Colonic mucosa (tissue), 4 donors: ENCODE measurements at regions of chr6 and their contacts with region 1.

Region 1: DNA sequence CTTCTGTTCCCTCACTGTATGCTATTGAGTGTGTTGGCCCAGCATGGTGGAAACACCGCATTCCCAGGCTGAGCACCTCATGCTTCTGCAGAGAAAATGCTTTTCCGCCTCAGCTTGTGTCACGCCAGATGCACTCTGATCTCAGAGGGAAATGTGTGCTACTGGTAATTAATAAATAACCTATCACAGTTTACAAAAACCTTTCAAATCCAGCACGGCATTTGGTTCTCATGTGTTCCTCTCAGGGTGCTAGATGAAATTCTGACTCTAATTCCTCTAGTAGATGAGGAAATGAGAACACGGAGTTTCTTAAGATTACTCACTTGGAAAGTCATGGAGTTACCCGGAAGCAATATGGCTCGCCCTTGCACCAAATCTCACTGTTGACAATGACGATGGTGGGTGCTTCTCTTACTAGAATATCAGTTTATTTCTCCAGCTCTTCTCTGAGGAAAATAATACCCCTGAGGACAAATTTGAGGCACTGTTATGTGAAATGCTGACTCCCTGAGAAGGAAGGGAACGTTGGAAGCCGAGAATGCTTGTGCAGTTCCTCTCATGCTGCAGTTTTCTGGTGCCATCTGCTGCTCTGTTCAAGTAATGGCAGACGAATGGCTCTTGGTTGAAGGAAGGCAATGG is 116.6 kb downstream of the RNF144B start:
- DNase-seq: peak; percentile 65
- H3K4me3 ChIP-seq: peak overlapping the region; percentile 21
- H3K27ac ChIP-seq: no peak overlapping the region
- H3K4me1 ChIP-seq: no peaks in the 10 kb centered on the region
- H3K27me3 ChIP-seq: no peaks in the 10 kb centered on the region
- CTCF ChIP-seq: peak; percentile 88

Region 2: DNA sequence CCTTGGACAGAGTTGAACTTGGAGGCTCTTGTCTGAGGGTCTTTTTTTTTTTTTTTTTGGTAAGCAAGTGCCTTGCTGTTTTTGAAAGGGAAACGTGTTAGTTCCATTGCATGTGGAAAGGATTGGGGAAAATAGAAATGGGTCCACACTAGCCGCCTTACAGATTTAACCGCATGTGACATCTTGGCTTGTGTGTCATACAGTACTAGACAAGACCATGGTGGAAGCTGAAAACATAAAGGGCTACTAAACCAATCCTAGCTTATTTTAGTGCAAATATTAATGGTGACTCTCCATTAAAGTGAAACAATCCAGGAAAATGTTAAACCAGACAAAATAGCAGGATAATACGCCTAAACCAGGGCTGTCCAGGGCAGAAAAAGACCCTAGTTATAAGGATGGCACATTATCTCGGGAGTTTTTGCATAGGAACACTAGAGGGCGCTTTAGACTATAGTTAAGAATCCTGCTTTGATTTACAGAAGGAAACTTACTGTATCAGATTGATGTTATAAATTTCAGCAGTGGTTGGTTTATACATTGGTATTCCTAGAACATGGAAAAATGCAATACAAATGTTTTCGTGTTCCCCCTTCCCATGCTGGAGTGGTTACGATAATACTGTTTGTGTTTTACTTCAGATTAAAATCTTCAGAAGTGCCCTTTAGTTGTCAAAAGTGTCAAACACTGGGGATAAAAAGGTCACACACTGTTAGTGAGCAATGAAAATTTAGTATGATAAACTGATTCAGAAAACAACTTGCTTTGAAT is 179.6 kb before region 1 on chr6:
- intact Hi-C with region 1: loop called (anchors 2 kb)
- DNase-seq: no peak
- H3K4me3 ChIP-seq: no peak overlapping the region
- H3K27ac ChIP-seq: no peak overlapping the region
- H3K4me1 ChIP-seq: no peaks in the 10 kb centered on the region
- H3K27me3 ChIP-seq: no peaks in the 10 kb centered on the region
- CTCF ChIP-seq: peak; percentile 59

Region 3: GRCh38 chr6:18388942-18389341 is 114.8 kb before region 1 on chr6:
- intact Hi-C with region 1: no loop called
- DNase-seq: no peak
- H3K4me3 ChIP-seq: no peak overlapping the region
- H3K27ac ChIP-seq: no peak overlapping the region
- H3K4me1 ChIP-seq: no peaks in the 10 kb centered on the region
- H3K27me3 ChIP-seq: no peaks in the 10 kb centered on the region
- CTCF ChIP-seq: no peak

Region 4: DNA sequence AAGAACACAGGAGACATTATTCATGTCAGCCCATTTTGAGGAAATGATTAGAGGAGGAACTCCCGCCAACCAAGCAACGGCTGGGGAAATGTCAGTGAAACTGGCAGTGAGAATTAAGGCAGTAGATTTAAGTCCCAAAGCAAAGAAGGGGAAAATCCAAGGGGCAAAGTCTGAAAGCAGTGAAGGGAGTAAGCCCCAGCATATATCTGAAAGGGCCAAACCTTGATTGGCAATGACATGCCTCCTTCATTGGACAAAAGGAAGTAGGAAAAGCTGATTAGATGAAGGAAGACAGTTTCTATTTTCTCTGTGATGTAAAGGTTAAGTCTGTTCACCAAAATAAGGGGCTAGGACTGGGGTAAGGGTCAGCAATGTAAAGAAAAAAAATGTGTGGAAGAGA is 73.8 kb after region 1 on chr6:
- intact Hi-C with region 1: no loop called
- DNase-seq: no peak
- H3K4me3 ChIP-seq: no peak overlapping the region
- H3K27ac ChIP-seq: no peak overlapping the region
- H3K4me1 ChIP-seq: no peaks in the 10 kb centered on the region
- H3K27me3 ChIP-seq: no peaks in the 10 kb centered on the region
- CTCF ChIP-seq: no peak

Region 5: GRCh38 chr6:19303383-19303782 is 799.7 kb after region 1 on chr6:
- intact Hi-C with region 1: no loop called
- DNase-seq: no peak
- H3K4me3 ChIP-seq: no peak overlapping the region
- H3K27ac ChIP-seq: no peak overlapping the region
- H3K4me1 ChIP-seq: no peaks in the 10 kb centered on the region
- H3K27me3 ChIP-seq: no peaks in the 10 kb centered on the region
- CTCF ChIP-seq: no peak